ENCODE measurements at regions of chr16 and their contacts with region 1.

Region 1: GRCh38 chr16:22190776-22191531 is 15.1 kb upstream of the EEF2K start:
- DNase-seq: peak; percentile 100
- H3K4me3 Mint-ChIP-seq: peak overlapping the region; percentile 86
- H3K27ac Mint-ChIP-seq: peak overlapping the region; percentile 100
- H3K4me1 Mint-ChIP-seq: peaks cover 59% of the 10 kb centered on the region
- H3K27me3 Mint-ChIP-seq: peaks cover 8% of the 10 kb centered on the region

Region 2: DNA sequence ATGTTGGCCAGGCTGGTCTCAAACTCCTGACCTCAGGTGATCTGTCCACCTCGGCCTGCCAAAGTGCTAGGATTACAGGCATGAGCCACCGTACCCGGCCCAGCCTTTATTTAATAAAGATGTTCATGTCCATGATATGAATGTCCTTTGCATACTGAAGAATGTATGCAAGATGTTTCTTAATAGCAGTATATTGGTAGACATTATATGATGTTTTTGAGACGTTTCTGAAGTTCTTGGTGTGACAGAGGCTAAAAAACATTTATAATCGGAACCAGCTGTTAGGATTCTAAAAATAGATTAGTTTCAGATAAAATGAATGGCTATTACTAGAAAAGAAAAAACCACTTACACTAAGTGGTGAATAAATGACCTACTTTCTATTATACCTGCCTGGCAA is 201.8 kb before region 1 on chr16:
- CTCF ChIA-PET with region 1: interaction called, 20 read pairs
- DNase-seq: no peak
- H3K4me3 Mint-ChIP-seq: no peak overlapping the region
- H3K27ac Mint-ChIP-seq: no peak overlapping the region
- H3K4me1 Mint-ChIP-seq: peaks cover 8% of the 10 kb centered on the region
- H3K27me3 Mint-ChIP-seq: no peaks in the 10 kb centered on the region

Region 3: GRCh38 chr16:22007509-22008214 is 183.3 kb before region 1 on chr16 and contains the start of gene MOSMO:
- CTCF ChIA-PET with region 1: interaction called, 46 read pairs
- DNase-seq: peak; percentile 78
- H3K4me3 Mint-ChIP-seq: peak within 1 kb of the TSS; percentile 85
- H3K27ac Mint-ChIP-seq: peak within 1 kb of the TSS; percentile 83
- H3K4me1 Mint-ChIP-seq: peaks cover 26% of the 10 kb centered on the region
- H3K27me3 Mint-ChIP-seq: peaks cover 41% of the 10 kb centered on the region

Region 4: GRCh38 chr16:22098405-22099255 is 92.3 kb before region 1 on chr16:
- CTCF ChIA-PET with region 1: interaction called, 19 read pairs
- DNase-seq: no peak
- H3K4me3 Mint-ChIP-seq: no peak overlapping the region
- H3K27ac Mint-ChIP-seq: no peak overlapping the region
- H3K4me1 Mint-ChIP-seq: no peaks in the 10 kb centered on the region
- H3K27me3 Mint-ChIP-seq: peaks cover 42% of the 10 kb centered on the region

Region 5: DNA sequence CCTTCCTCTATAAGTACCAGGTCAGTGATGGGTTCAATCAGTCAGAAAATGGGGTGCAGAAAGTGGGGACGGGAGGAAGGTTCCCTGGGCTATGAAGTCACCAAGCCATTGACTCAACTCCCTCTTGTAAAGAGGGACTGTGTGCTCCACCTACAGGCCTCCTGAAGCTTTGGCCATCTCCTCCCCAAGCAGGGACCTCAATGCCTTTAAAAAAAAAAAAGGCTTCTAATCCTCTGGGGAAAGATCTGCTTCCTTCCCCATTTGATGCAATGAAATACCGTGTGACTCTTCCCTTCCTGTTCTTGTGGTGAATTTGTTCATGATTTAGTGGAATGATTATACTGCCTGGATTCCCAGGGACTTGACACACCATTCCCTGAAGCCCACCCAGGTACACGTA is 67.8 kb before region 1 on chr16:
- CTCF ChIA-PET with region 1: no interaction called
- DNase-seq: no peak
- H3K4me3 Mint-ChIP-seq: no peak overlapping the region
- H3K27ac Mint-ChIP-seq: no peak overlapping the region
- H3K4me1 Mint-ChIP-seq: no peaks in the 10 kb centered on the region
- H3K27me3 Mint-ChIP-seq: peaks cover 7% of the 10 kb centered on the region

Region 6: GRCh38 chr16:22161999-22162655 is 28.8 kb before region 1 on chr16 and contains the start of gene SDR42E2:
- CTCF ChIA-PET with region 1: no interaction called
- DNase-seq: peak; percentile 56
- H3K4me3 Mint-ChIP-seq: peak within 1 kb of the TSS; percentile 6
- H3K27ac Mint-ChIP-seq: no peak within 1 kb of the TSS
- H3K4me1 Mint-ChIP-seq: peaks cover 4% of the 10 kb centered on the region
- H3K27me3 Mint-ChIP-seq: peaks cover 57% of the 10 kb centered on the region

Region 7: GRCh38 chr16:22297114-22297878 is 106.3 kb after region 1 on chr16 and contains the start of gene POLR3E:
- CTCF ChIA-PET with region 1: interaction called, 115 read pairs
- DNase-seq: peak; percentile 100
- H3K4me3 Mint-ChIP-seq: peak within 1 kb of the TSS; percentile 88
- H3K27ac Mint-ChIP-seq: peak within 1 kb of the TSS; percentile 99
- H3K4me1 Mint-ChIP-seq: peaks cover 37% of the 10 kb centered on the region
- H3K27me3 Mint-ChIP-seq: peaks cover 11% of the 10 kb centered on the region